ENCODE measurements at regions of chr5 and their contacts with region 1.

Region 1: GRCh38 chr5:138900281-138900965 is 25.3 kb upstream of the LRRTM2 start:
- DNase-seq: peak; percentile 89
- H3K4me3 ChIP-seq: peak overlapping the region in 1 of 3 experiments; percentile 14
- H3K27ac ChIP-seq: peak overlapping the region; percentile 79
- H3K4me1 ChIP-seq: peaks cover 50% of the 10 kb centered on the region
- H3K27me3 ChIP-seq: no peaks in the 10 kb centered on the region
- CTCF ChIP-seq: no peak
- POLR2A ChIP-seq: no peak

Region 2: GRCh38 chr5:138352071-138352721 is 548.2 kb before region 1 on chr5 and contains the start of gene KDM3B:
- CTCF ChIA-PET with region 1: no interaction called
- POLR2A ChIA-PET with region 1: no interaction called
- dilution Hi-C with region 1: no loop called
- intact Hi-C with region 1: no loop called
- DNase-seq: peak; percentile 79
- H3K4me3 ChIP-seq: peak within 1 kb of the TSS; percentile 58 to 95 (median 78)
- H3K27ac ChIP-seq: peak within 1 kb of the TSS; percentile 65
- H3K4me1 ChIP-seq: peaks cover 14% of the 10 kb centered on the region
- H3K27me3 ChIP-seq: no peaks in the 10 kb centered on the region
- CTCF ChIP-seq: peak; percentile 99 to 100
- POLR2A ChIP-seq: peak; percentile 41
- total RNA-seq, gene KDM3B: 52.6 and 55.7 TPM in 2 replicates

Region 3: GRCh38 chr5:138594305-138595058 is 305.9 kb before region 1 on chr5:
- CTCF ChIA-PET with region 1: no interaction called
- POLR2A ChIA-PET with region 1: no interaction called
- dilution Hi-C with region 1: no loop called
- intact Hi-C with region 1: no loop called
- DNase-seq: no peak
- H3K4me3 ChIP-seq: no peak overlapping the region
- H3K27ac ChIP-seq: no peak overlapping the region
- H3K4me1 ChIP-seq: no peaks in the 10 kb centered on the region
- H3K27me3 ChIP-seq: peaks cover 9 to 11% of the 10 kb centered on the region in 2 experiments
- CTCF ChIP-seq: peak; percentile 9 to 22
- POLR2A ChIP-seq: no peak

Region 4: GRCh38 chr5:138760448-138761110 is 139.8 kb before region 1 on chr5:
- CTCF ChIA-PET with region 1: no interaction called
- POLR2A ChIA-PET with region 1: no interaction called
- dilution Hi-C with region 1: no loop called
- intact Hi-C with region 1: loop called (anchors 5 kb)
- DNase-seq: peak; percentile 35
- H3K4me3 ChIP-seq: peak overlapping the region in 1 of 3 experiments; percentile 4
- H3K27ac ChIP-seq: peak overlapping the region; percentile 81
- H3K4me1 ChIP-seq: peaks cover 17% of the 10 kb centered on the region
- H3K27me3 ChIP-seq: no peaks in the 10 kb centered on the region
- CTCF ChIP-seq: no peak
- POLR2A ChIP-seq: no peak

Region 5: GRCh38 chr5:138844812-138845513 is 55.5 kb before region 1 on chr5:
- CTCF ChIA-PET with region 1: interaction called, 3 read pairs
- POLR2A ChIA-PET with region 1: no interaction called
- dilution Hi-C with region 1: no loop called
- intact Hi-C with region 1: loop called (anchors 5 kb)
- DNase-seq: peak; percentile 74
- H3K4me3 ChIP-seq: no peak overlapping the region
- H3K27ac ChIP-seq: peak overlapping the region; percentile 62
- H3K4me1 ChIP-seq: peaks cover 33% of the 10 kb centered on the region
- H3K27me3 ChIP-seq: no peaks in the 10 kb centered on the region
- CTCF ChIP-seq: no peak
- POLR2A ChIP-seq: no peak

Region 6: GRCh38 chr5:139014726-139015125 is 114.3 kb after region 1 on chr5:
- CTCF ChIA-PET with region 1: no interaction called
- POLR2A ChIA-PET with region 1: no interaction called
- dilution Hi-C with region 1: no loop called
- intact Hi-C with region 1: no loop called
- DNase-seq: peak; percentile 85
- H3K4me3 ChIP-seq: no peak overlapping the region
- H3K27ac ChIP-seq: no peak overlapping the region
- H3K4me1 ChIP-seq: peaks cover 13% of the 10 kb centered on the region
- H3K27me3 ChIP-seq: no peaks in the 10 kb centered on the region
- CTCF ChIP-seq: no peak
- POLR2A ChIP-seq: no peak